Ascending aorta (tissue), 2 donors: ENCODE measurements at regions of chr1 and their contacts with region 1.

Region 1: DNA sequence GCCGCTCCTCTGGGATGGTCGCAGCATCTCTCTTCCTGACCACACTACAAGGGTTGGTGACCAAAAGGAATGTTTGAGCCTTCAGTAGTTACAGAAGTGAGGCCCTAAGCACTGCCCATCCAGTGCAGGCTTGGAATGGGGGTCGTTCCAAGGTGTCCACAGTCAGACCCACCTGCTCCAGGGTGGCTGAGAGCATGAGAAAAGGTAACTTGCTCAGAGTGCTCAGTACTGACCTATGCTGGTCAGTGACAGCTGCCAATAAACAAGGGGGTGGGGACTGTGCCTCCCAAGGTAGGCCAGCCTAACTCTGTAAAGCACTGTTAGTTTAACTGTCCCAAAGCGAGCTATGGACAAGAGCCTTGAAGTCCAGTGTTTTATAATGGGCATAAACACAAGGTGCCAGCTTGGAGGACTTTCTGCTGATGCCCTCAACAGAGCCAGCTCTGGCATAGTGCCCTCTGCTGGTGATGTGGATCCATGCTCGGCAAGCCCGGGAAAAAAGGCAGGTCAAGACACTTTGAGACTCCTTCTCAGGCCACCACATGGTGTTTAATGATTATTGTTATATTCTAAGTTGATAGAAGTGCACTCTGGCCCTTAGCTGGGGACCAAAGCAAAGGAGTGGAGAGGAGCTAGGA is 78.1 kb upstream of the DNAH14 start:
- DNase-seq: no peak
- H3K4me3 ChIP-seq: no peak overlapping the region
- H3K27ac ChIP-seq: no peak overlapping the region
- H3K4me1 ChIP-seq: no peaks in the 10 kb centered on the region
- H3K27me3 ChIP-seq: no peaks in the 10 kb centered on the region
- CTCF ChIP-seq: peak in 2 of 3 experiments; percentile 18 to 30

Region 2: GRCh38 chr1:224513787-224514209 is 337.5 kb before region 1 on chr1:
- intact Hi-C with region 1: loop called (anchors 2 kb)
- DNase-seq: peak in 1 of 2 donors; percentile 84
- H3K4me3 ChIP-seq: no peak overlapping the region
- H3K27ac ChIP-seq: no peak overlapping the region
- H3K4me1 ChIP-seq: no peaks in the 10 kb centered on the region
- H3K27me3 ChIP-seq: no peaks in the 10 kb centered on the region
- CTCF ChIP-seq: peak; percentile 68 to 86 (median 68)

Region 3: DNA sequence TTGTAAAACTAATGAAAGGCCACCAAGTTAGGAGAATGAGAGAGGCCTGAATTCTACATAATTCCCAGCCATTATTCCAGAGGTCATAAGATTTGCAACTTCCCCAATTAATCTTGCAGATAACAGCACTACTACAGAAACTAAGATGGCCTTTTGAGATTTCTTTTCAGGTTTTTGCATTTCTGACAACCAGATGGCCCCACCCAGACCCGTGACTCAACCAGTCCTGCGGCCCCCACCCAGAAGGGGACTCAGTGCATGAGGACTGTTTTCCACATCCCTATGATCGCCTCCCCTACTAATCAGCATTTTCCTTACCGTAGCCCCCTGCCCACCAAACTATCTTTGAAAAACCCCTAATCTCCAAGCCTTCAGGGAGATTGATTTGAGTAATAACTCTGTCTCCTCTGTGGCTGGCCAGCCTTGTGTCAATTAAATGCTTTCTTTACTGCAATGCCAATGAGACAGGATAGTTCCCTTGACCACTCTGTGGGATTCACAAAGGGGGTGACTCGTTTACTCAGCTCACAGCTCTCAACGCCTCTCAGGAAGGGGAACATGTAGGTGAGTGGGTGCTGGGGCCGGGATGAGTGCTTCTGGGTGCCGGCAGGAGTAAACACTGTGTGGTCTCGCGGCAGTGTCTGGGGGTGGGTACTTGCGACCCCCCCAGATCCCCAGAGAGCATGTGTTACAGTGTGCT is 245.7 kb before region 1 on chr1:
- intact Hi-C with region 1: no loop called
- DNase-seq: no peak
- H3K4me3 ChIP-seq: no peak overlapping the region
- H3K27ac ChIP-seq: no peak overlapping the region
- H3K4me1 ChIP-seq: no peaks in the 10 kb centered on the region
- H3K27me3 ChIP-seq: no peaks in the 10 kb centered on the region
- CTCF ChIP-seq: no peak